Aorta (tissue), 5 donors: ENCODE measurements at regions of chr20 and their contacts with region 1.

Region 1: GRCh38 chr20:37192137-37192854 is 12.9 kb upstream of the MROH8 start:
- DNase-seq: peak; percentile 93
- ATAC-seq: peak; percentile 94
- H3K4me3 ChIP-seq: no peak overlapping the region
- H3K27ac ChIP-seq: no peak overlapping the region
- H3K4me1 ChIP-seq: no peaks in the 10 kb centered on the region
- H3K27me3 ChIP-seq: no peaks in the 10 kb centered on the region

Region 2: DNA sequence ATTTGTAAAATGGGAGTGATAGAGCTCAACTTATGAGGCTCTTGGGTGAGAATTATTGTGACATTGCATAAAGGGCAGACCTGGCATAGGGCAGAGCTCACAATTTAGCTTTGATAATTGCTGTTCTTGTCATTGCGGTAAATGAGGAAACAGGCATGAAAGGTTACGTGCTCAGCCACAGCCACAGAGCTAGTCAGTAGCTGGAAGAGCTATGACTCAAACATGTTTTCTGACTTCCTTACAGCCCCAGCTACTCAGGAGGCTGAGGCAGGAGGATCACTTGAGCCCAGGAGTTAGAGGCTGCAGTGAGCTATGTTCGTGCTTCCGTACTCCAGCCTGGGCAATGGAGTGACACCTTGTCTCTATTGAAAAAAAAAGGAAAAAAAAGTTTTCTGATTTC is 72.9 kb after region 1 on chr20:
- intact Hi-C with region 1: loop called in 1 of 2 experiments (anchors 10 kb)
- DNase-seq: peak in 1 of 2 donors; percentile 11
- ATAC-seq: no peak
- H3K4me3 ChIP-seq: no peak overlapping the region
- H3K27ac ChIP-seq: no peak overlapping the region
- H3K4me1 ChIP-seq: no peaks in the 10 kb centered on the region
- H3K27me3 ChIP-seq: no peaks in the 10 kb centered on the region